CD8-positive, alpha-beta memory T cell (primary cell): ENCODE measurements at regions of chr20 and their contacts with region 1.

Region 1: GRCh38 chr20:31572701-31573554 is 32.2 kb upstream of the ID1 start:
- DNase-seq: peak; percentile 78 to 89 (median 80)
- H3K4me3 ChIP-seq: peak overlapping the region; percentile 91
- H3K4me3 Mint-ChIP-seq: peak overlapping the region; percentile 84 to 93 (median 89)
- H3K27ac ChIP-seq: peak overlapping the region; percentile 80
- H3K27ac Mint-ChIP-seq: peak overlapping the region; percentile 80 to 95 (median 92)
- H3K4me1 ChIP-seq: peaks cover 14% of the 10 kb centered on the region
- H3K4me1 Mint-ChIP-seq: peaks cover 20 to 27% (median 25%) of the 10 kb centered on the region in 3 donors
- H3K27me3 ChIP-seq: no peaks in the 10 kb centered on the region
- H3K27me3 Mint-ChIP-seq: no peaks in the 10 kb centered on the region

Region 2: GRCh38 chr20:31523361-31524283 is 49.3 kb before region 1 on chr20:
- CTCF ChIA-PET with region 1: no interaction called
- POLR2A ChIA-PET with region 1: no interaction called
- DNase-seq: no peak
- H3K4me3 ChIP-seq: no peak overlapping the region
- H3K4me3 Mint-ChIP-seq: no peak overlapping the region
- H3K27ac ChIP-seq: no peak overlapping the region
- H3K27ac Mint-ChIP-seq: peak overlapping the region in 5 of 8 donors; percentile 18 to 73 (median 32)
- H3K4me1 ChIP-seq: peaks cover 12% of the 10 kb centered on the region
- H3K4me1 Mint-ChIP-seq: peaks cover 30 to 73% (median 65%) of the 10 kb centered on the region in 3 donors
- H3K27me3 ChIP-seq: no peaks in the 10 kb centered on the region
- H3K27me3 Mint-ChIP-seq: no peaks in the 10 kb centered on the region

Region 3: GRCh38 chr20:31555203-31555775 is 17.6 kb before region 1 on chr20:
- CTCF ChIA-PET with region 1: interaction called, 46 read pairs
- POLR2A ChIA-PET with region 1: interaction called, 5 read pairs
- DNase-seq: no peak
- H3K4me3 ChIP-seq: no peak overlapping the region
- H3K4me3 Mint-ChIP-seq: no peak overlapping the region
- H3K27ac ChIP-seq: no peak overlapping the region
- H3K27ac Mint-ChIP-seq: peak overlapping the region in 2 of 8 donors; percentile 11 to 42
- H3K4me1 ChIP-seq: peaks cover 7% of the 10 kb centered on the region
- H3K4me1 Mint-ChIP-seq: peaks cover 5 to 6% (median 6%) of the 10 kb centered on the region in 3 donors
- H3K27me3 ChIP-seq: no peaks in the 10 kb centered on the region
- H3K27me3 Mint-ChIP-seq: no peaks in the 10 kb centered on the region

Region 4: GRCh38 chr20:31560094-31560899 is 12.6 kb before region 1 on chr20:
- CTCF ChIA-PET with region 1: interaction called, 46 read pairs
- POLR2A ChIA-PET with region 1: interaction called, 5 read pairs
- DNase-seq: peak; percentile 62 to 79 (median 69)
- H3K4me3 ChIP-seq: no peak overlapping the region
- H3K4me3 Mint-ChIP-seq: peak overlapping the region in 1 of 7 donors; percentile 16
- H3K27ac ChIP-seq: no peak overlapping the region
- H3K27ac Mint-ChIP-seq: peak overlapping the region in 5 of 8 donors; percentile 39 to 92 (median 58)
- H3K4me1 ChIP-seq: peaks cover 12% of the 10 kb centered on the region
- H3K4me1 Mint-ChIP-seq: peaks cover 6 to 7% (median 7%) of the 10 kb centered on the region in 3 donors
- H3K27me3 ChIP-seq: no peaks in the 10 kb centered on the region
- H3K27me3 Mint-ChIP-seq: no peaks in the 10 kb centered on the region

Region 5: DNA sequence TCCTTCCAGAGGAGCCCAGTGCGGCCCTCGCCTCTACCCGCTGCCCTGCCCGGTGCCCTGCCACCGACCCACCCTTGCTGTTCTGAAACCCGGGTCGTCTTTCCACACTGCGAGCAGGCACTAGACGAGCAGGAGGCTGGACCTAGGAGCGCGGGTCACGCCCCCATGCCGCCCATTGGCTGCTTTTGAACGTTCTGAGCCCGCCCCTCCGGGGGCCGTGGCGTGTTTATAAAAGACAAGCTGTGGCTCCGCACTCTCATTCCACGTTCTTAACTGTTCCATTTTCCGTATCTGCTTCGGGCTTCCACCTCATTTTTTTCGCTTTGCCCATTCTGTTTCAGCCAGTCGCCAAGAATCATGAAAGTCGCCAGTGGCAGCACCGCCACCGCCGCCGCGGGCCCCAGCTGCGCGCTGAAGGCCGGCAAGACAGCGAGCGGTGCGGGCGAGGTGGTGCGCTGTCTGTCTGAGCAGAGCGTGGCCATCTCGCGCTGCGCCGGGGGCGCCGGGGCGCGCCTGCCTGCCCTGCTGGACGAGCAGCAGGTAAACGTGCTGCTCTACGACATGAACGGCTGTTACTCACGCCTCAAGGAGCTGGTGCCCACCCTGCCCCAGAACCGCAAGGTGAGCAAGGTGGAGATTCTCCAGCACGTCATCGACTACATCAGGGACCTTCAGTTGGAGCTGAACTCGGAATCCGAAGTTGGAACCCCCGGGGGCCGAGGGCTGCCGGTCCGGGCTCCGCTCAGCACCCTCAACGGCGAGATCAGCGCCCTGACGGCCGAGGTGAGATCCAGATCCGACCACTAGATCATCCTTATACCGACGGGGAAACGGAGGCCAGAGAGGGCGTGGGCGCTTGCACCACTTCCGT is 32.3 kb after region 1 on chr20 and contains the start of gene ID1:
- CTCF ChIA-PET with region 1: interaction called, 887 read pairs
- POLR2A ChIA-PET with region 1: interaction called, 15 read pairs
- DNase-seq: peak; percentile 83 to 90 (median 86)
- H3K4me3 ChIP-seq: peak within 1 kb of the TSS; percentile 82
- H3K4me3 Mint-ChIP-seq: peak within 1 kb of the TSS; percentile 85 to 98 (median 90)
- H3K27ac ChIP-seq: peak within 1 kb of the TSS; percentile 73
- H3K27ac Mint-ChIP-seq: peak within 1 kb of the TSS in 7 of 8 donors; percentile 78 to 95 (median 89)
- H3K4me1 ChIP-seq: peaks cover 16% of the 10 kb centered on the region
- H3K4me1 Mint-ChIP-seq: peaks cover 26 to 37% (median 28%) of the 10 kb centered on the region in 3 donors
- H3K27me3 ChIP-seq: peaks cover 20% of the 10 kb centered on the region
- H3K27me3 Mint-ChIP-seq: peaks cover 27 to 48% of the 10 kb centered on the region in 2 donors
- total RNA-seq, gene ID1: 0.55 to 0.72 TPM